Mammary epithelial cell (primary cell): ENCODE measurements at regions of chr3 and their contacts with region 1.

Region 1: DNA sequence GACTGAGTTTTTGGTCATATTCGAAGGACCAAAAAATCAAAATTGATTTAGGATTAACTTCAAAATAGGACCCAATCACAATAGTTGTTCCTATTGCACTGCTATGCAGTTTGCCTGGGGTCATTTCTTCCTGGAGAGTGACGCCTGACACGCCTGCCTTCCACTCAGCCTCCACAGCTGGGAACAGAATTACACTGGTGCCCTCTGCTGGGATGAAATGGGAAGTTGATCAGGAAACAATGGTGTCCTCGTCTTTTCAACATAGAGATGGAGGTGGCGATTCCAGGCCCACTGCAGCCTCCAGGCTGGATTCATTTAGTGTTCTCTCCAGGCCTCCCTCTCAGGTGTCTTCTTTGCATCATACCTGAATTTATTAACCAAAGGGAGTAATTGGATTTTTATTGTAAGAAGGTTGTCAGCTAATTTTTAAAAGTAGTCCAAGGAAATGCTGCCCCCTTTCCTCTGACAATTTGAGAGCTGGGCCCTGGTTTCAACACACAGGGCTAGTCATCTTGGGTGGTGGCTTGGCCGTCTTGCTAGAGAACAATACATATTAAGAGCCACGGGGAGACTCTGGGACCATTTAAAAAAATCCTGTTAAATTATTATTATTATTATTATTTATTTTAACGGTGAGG is 69.7 kb downstream of the GAP43 start:
- DNase-seq: peak; percentile 65
- H3K4me3 ChIP-seq: no peak overlapping the region
- H3K27ac ChIP-seq: peak overlapping the region; percentile 25
- H3K4me1 ChIP-seq: no peaks in the 10 kb centered on the region
- H3K27me3 ChIP-seq: no peaks in the 10 kb centered on the region
- CTCF ChIP-seq: peak; percentile 71 to 88

Region 2: DNA sequence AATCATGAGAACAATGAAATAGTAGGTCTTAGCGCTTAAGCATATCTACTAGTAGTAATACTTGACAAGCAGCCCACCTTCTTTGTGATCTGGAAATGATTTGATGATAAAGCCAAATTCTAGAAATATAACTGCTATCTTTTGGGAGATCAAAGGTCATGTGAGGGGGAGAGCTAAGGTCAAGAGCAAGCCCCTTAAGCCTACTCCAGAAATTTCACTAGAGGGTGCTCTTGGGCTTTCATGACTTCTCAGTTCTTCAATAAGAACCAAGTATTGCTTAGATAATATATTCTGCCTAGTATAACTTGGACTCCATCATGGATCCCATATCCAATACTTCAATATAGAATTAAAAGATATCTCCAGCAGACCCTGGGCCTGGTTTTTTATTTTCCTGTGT is 865.5 kb before region 1 on chr3:
- CTCF ChIA-PET with region 1: no interaction called
- dilution Hi-C with region 1: no loop called
- in situ Hi-C with region 1: no loop called
- intact Hi-C with region 1: loop called (anchors 2 kb)
- DNase-seq: peak; percentile 18
- H3K4me3 ChIP-seq: no peak overlapping the region
- H3K27ac ChIP-seq: no peak overlapping the region
- H3K4me1 ChIP-seq: no peaks in the 10 kb centered on the region
- H3K27me3 ChIP-seq: no peaks in the 10 kb centered on the region
- CTCF ChIP-seq: peak; percentile 58 to 60

Region 3: DNA sequence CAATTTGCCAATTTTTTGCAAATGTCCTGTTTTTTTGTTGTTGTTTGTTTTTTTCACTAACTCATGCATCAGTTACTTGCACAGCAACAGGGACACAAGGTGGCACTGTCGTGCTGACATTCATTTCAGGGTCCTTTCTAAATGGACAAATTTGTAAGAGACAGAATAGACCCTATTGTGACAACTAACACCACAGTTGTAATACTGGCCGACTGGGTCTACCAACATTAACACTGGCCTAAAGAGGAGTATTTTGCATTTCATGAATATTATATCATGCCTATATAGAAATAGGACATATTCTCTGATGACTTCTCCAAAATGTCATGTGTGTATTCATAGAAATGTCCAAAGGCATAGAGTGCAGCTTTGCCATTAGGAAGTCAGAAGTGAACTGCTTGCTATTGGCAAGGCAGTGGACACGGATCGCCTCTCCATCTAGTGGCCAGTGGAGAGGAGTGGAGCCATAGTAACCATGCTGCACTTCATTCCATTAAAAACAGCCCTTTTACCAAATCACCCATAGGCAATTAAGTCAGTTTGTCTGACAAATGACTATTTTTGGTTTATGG is 600.7 kb before region 1 on chr3:
- CTCF ChIA-PET with region 1: interaction called, 3 read pairs
- dilution Hi-C with region 1: no loop called
- in situ Hi-C with region 1: no loop called
- intact Hi-C with region 1: loop called (anchors 5 kb)
- DNase-seq: peak; percentile 39
- H3K4me3 ChIP-seq: no peak overlapping the region
- H3K27ac ChIP-seq: no peak overlapping the region
- H3K4me1 ChIP-seq: peaks cover under 1% of the 10 kb centered on the region
- H3K27me3 ChIP-seq: no peaks in the 10 kb centered on the region
- CTCF ChIP-seq: peak; percentile 68 to 79

Region 4: DNA sequence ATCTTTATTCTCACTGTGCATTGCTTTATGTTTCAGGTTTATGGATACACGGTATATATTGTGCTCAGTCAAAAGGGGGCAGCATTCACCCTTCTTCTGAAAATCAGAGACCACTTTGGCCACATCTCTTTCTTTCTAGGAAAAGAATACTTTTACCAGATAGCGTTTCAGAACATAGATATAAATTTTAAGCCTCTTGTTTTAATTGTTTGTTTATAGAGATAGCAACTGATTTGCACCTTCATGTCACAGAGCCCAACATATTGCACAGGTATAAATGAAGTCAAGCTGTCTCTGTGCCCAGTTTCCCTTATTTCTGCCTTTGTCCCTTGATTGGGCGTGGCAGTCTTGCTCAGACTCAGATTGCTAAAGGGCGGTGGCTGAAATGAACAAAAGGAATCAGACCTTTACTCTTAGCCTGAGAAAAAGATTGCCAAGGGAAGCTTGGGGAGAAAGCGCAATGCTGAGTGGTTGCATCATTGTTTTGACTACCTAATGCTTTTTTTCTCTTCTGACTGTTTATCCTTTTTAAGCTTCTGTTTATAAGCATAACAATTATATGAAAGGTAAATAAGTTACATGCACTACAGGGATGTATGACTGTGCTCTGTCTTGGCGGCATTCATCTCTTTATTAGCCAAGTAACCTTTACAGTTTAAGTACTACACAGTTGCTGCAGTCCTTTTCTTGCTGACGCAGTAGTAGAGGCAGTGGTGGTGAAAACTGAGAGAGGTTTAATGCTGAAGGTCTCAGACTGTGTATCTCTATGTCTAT is 475.1 kb before region 1 on chr3:
- CTCF ChIA-PET with region 1: interaction called, 3 read pairs
- dilution Hi-C with region 1: no loop called
- in situ Hi-C with region 1: loop called (anchors 10 kb)
- intact Hi-C with region 1: loop called (anchors 1 kb)
- DNase-seq: peak; percentile 56
- H3K4me3 ChIP-seq: no peak overlapping the region
- H3K27ac ChIP-seq: no peak overlapping the region
- H3K4me1 ChIP-seq: no peaks in the 10 kb centered on the region
- H3K27me3 ChIP-seq: no peaks in the 10 kb centered on the region
- CTCF ChIP-seq: peak; percentile 72

Region 5: DNA sequence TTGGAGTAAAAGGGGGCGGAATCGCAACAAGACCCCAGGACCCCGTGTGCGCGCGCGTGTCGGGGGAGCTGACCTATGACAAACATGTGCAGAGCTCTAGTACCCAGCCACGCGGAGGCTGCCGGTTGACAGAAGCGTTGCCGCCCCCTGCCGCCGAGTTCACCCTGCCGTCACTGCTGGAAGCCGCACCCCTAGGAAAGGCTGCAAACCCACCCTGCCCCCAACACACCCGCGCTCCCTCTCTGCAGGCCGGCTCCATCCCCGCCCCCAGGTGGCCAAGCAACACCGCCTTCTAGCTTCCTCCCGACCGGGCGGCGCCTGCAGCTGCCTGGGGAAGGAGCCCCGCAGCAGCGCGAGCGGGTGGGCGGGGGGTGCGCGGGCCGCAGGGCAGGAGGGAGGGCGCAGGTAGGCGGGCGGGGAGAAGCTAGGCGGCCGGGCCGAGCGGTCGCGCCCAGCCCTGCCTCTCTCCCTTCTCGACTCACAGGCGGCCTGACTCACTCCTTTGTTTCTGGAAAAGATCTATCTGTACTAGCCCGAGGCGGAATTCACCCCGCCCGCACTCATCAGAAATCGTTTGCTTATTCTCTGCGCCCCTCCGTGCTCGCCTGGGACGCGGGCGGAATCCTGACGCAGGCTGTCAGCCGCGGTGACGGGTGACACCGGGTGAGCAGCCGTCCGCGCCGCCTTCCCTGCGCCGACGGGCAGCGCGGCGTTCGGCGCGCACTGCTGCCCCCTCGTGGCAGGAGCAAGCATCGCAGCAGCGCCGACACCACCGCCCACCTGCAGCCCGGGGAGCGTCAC is 91.1 kb after region 1 on chr3:
- CTCF ChIA-PET with region 1: interaction called, 3 read pairs
- dilution Hi-C with region 1: no loop called
- in situ Hi-C with region 1: no loop called
- intact Hi-C with region 1: loop called (anchors 1 kb)
- DNase-seq: peak; percentile 95
- H3K4me3 ChIP-seq: peak overlapping the region; percentile 41 to 79 (median 48)
- H3K27ac ChIP-seq: peak overlapping the region; percentile 95
- H3K4me1 ChIP-seq: peaks cover 29% of the 10 kb centered on the region
- H3K27me3 ChIP-seq: no peaks in the 10 kb centered on the region
- CTCF ChIP-seq: peak; percentile 94

Region 6: GRCh38 chr3:115819785-115820384 is 126.9 kb after region 1 on chr3:
- CTCF ChIA-PET with region 1: interaction called, 3 read pairs
- dilution Hi-C with region 1: no loop called
- in situ Hi-C with region 1: loop called (anchors 10 to 25 kb)
- intact Hi-C with region 1: no loop called
- DNase-seq: peak; percentile 64
- H3K4me3 ChIP-seq: no peak overlapping the region
- H3K27ac ChIP-seq: no peak overlapping the region
- H3K4me1 ChIP-seq: peaks cover 10% of the 10 kb centered on the region
- H3K27me3 ChIP-seq: no peaks in the 10 kb centered on the region
- CTCF ChIP-seq: peak; percentile 97 to 100